ENCODE measurements at regions of chr18 and their contacts with region 1.

Region 1: DNA sequence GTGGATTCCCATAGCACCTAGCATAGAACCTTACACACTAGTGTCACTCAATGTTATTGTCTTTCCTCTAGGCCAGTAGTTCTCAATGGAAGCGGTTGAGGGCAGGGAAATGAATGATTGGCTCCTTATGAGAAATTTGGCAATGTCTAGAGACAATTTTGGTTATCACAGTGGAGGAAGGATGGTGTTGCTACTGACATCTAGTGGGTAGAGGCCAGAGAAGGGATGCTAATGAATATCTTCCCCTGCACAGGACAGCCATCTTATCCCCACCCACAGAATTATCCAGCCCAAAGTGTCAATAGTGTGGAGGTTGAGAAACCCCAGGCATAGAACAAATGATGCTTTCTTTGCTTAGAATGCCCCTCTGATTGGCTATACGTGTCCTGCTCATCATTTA is 15.8 kb downstream of the C18orf63 start:
- DNase-seq: peak; percentile 76
- ATAC-seq: peak; percentile 99
- H3K4me3 ChIP-seq: no peak overlapping the region
- H3K27ac ChIP-seq: no peak overlapping the region
- H3K4me1 ChIP-seq: no peaks in the 10 kb centered on the region
- H3K27me3 ChIP-seq: no peaks in the 10 kb centered on the region
- CTCF ChIP-seq: peak; percentile 76

Region 2: DNA sequence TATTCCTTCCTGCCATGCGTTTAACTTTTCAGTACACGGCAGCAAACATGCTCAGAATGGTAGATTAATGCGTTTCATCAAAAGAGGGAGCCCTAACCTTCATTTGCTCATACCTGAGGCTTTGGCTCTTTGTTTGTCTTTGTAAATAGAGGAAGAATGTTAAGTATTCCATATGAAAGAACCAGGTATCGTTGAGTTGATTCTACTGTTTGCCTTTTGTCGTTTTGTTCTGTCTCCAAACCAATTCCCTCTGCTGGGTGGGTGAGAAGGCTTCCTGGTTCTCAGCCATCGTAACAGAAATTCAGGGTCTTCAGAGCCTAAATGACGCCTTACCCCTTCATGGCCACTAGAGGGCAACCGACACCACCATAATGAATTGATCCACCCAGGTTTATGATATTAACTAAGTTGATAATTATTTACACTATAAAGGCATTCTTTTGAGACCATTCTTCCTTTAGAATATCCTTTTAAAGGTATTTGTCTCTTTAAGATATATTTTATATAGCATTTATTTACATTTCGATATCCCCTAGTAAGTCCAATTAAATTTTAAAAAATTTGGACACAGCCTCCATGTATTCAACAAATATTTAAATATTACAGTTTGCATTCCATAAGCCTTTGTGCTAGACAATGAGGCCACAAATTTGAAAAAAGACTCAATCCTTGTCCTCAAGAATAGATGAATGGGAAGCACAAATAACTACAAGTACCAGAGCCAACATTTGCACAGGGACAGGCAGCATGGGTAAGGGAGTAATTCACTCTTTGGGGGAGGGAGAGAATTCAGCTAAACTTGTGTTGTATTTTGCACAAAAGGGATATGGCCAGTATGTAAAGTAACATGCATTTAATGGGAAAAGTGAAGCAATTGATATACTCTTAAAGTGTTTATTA is 134.9 kb before region 1 on chr18:
- CTCF ChIA-PET with region 1: interaction called, 5 read pairs
- POLR2A ChIA-PET with region 1: no interaction called
- intact Hi-C with region 1: loop called (anchors 1 kb)
- DNase-seq: peak; percentile 75
- ATAC-seq: peak; percentile 90
- H3K4me3 ChIP-seq: peak overlapping the region; percentile 67
- H3K27ac ChIP-seq: no peak overlapping the region
- H3K4me1 ChIP-seq: no peaks in the 10 kb centered on the region
- H3K27me3 ChIP-seq: no peaks in the 10 kb centered on the region
- CTCF ChIP-seq: peak; percentile 96

Region 3: DNA sequence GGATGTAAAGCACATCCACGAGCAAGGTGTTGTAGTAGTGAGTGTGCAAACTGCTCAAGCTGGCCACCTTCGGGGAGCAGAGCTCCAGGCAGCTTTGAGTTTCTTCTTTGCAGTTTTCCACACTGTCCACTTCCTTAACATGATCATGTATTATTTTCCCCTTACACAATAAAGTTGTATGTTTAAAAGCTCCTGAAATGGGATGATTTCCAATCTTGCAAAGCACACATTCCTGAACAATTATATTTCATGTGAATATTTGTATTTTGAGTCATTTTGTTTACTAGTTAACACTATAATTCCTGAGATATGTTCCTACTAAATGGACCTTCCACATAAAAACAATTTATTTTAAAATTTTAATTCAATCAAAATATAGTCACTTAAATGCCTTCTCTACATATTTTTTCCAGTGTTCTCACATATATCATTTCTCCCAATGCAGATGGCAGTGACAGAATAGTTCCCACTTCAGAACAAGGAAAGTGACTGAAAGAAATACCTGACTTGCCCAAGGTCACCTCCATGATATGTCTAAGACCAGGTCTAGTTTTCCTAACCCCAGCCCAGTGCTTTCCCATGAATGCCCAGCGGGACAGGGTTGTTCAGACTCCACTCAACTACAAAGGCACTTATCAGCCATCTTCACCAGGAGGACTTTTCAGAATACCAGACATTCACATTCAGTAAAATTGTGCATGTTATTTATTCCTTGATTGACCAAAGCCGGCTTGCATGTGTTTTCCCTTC is 45.1 kb before region 1 on chr18:
- CTCF ChIA-PET with region 1: no interaction called
- POLR2A ChIA-PET with region 1: no interaction called
- intact Hi-C with region 1: loop called (anchors 2 kb)
- DNase-seq: peak; percentile 61
- ATAC-seq: peak; percentile 19
- H3K4me3 ChIP-seq: peak overlapping the region; percentile 16; the same call in 1 of the 2 replicates
- H3K27ac ChIP-seq: peak overlapping the region; percentile 27
- H3K4me1 ChIP-seq: peaks cover 78% of the 10 kb centered on the region
- H3K27me3 ChIP-seq: no peaks in the 10 kb centered on the region
- CTCF ChIP-seq: no peak

Region 4: GRCh38 chr18:74291771-74292540 is 39.4 kb before region 1 on chr18 and contains the start of gene CYB5A:
- CTCF ChIA-PET with region 1: no interaction called
- POLR2A ChIA-PET with region 1: no interaction called
- intact Hi-C with region 1: loop called (anchors 1 kb)
- DNase-seq: peak; percentile 94
- ATAC-seq: peak; percentile 85
- H3K4me3 ChIP-seq: peak within 1 kb of the TSS; percentile 91
- H3K27ac ChIP-seq: no peak within 1 kb of the TSS
- H3K4me1 ChIP-seq: peaks cover 32% of the 10 kb centered on the region
- H3K27me3 ChIP-seq: no peaks in the 10 kb centered on the region
- CTCF ChIP-seq: no peak
- total RNA-seq, gene CYB5A: 98.0 and 130 TPM in 2 replicates

Region 5: DNA sequence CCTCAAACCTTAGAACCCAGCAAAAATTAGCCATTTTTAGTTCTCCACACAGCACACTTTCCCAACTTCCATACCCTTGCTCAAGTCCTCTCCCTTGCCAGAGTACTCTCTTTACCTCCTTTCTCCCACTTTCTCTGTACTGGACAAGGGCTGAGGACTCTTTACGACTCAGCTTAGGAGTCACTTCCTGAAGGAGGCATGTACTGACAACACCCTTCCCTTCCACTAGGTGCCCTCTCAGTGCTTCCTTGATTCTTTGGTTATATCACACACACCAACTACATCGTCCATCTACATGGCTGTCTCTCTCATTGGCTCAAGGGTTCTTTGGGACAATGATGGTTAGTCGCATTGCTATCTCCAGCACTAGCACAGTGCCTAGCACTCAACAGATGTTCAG is 21.0 kb before region 1 on chr18:
- CTCF ChIA-PET with region 1: no interaction called
- POLR2A ChIA-PET with region 1: interaction called, 7 read pairs
- intact Hi-C with region 1: loop called (anchors 1 kb)
- DNase-seq: peak; percentile 69
- ATAC-seq: peak; percentile 100
- H3K4me3 ChIP-seq: no peak overlapping the region
- H3K27ac ChIP-seq: no peak overlapping the region
- H3K4me1 ChIP-seq: no peaks in the 10 kb centered on the region; the same call in 1 of the 2 replicates
- H3K27me3 ChIP-seq: no peaks in the 10 kb centered on the region
- CTCF ChIP-seq: peak; percentile 64

Measured in PC-3 (cell line).